Naive thymus-derived CD4-positive, alpha-beta T cell (primary cell): ENCODE measurements at regions of chr1 and their contacts with region 1.

Region 1: DNA sequence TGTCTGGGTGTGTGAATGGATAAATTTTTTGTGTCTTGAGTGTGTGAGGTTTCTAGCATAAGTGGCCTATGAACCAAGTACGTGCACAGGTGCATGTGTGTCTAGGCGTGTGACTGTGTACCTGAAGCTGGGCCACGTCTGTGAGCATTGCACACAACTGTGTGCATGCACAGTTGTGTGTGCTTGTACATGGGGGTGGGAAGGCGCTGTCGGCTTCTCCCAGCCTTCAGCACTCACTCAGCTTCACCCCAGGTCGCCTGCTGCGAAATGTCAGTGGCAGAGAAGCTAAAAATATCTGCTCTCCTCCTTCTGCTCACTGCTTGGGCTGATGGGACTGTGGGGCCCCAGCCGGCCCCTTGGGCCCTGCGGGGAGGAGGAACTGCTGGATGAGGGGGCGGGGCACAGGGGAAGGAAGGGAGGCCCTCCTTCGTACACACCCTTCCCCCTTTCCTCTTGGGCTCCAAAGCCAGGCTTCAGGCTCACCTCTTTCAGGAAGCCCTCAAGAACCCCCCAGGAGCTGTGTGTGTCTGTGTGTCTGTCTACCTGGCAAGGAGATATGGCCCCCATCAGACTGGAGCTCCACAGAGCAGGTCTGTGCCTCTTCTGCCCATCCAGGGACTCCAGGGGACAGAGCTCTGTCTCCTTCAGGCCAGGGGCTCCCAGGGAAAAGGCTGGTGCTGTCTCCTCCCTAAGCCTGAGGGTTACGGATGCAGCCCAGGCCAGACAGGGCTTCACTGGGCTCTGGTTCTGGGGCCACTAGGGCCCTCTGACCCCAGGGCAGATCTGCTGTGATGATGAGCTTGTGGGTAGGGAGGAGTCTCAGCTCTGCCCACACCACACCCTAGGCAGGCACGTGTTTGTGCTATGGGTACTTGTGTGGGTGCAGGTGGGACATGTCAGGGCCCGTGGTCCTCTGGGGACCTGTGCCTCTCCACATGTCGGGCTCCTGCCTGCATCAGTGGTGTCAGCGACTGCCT is 35.6 kb upstream of the WASF2 start:
- DNase-seq: peak in 8 of 9 donors; percentile 41 to 67 (median 52)
- ATAC-seq: peak; percentile 36
- H3K4me3 ChIP-seq: peak overlapping the region; percentile 53
- H3K4me3 Mint-ChIP-seq: peak overlapping the region; percentile 72 to 98 (median 93)
- H3K27ac ChIP-seq: peak overlapping the region; percentile 93
- H3K27ac Mint-ChIP-seq: peak overlapping the region; percentile 80 to 99 (median 98)
- H3K4me1 ChIP-seq: peaks cover 62% of the 10 kb centered on the region in 2 donors
- H3K4me1 Mint-ChIP-seq: peaks cover 63 to 82% (median 74%) of the 10 kb centered on the region in 7 donors
- H3K27me3 ChIP-seq: no peaks in the 10 kb centered on the region
- H3K27me3 Mint-ChIP-seq: no peaks in the 10 kb centered on the region

Region 2: GRCh38 chr1:27349784-27350662 is 175.6 kb before region 1 on chr1:
- CTCF ChIA-PET with region 1: no interaction called
- POLR2A ChIA-PET with region 1: no interaction called
- intact Hi-C with region 1: no loop called
- DNase-seq: no peak
- ATAC-seq: peak; percentile 79
- H3K4me3 ChIP-seq: no peak overlapping the region
- H3K4me3 Mint-ChIP-seq: peak overlapping the region in 1 of 10 donors; percentile 69
- H3K27ac ChIP-seq: peak overlapping the region; percentile 70
- H3K27ac Mint-ChIP-seq: no peak overlapping the region
- H3K4me1 ChIP-seq: peaks cover 0 to 7% of the 10 kb centered on the region in 2 donors
- H3K4me1 Mint-ChIP-seq: peaks cover 5 to 28% (median 23%) of the 10 kb centered on the region in 7 donors
- H3K27me3 ChIP-seq: no peaks in the 10 kb centered on the region
- H3K27me3 Mint-ChIP-seq: no peaks in the 10 kb centered on the region

Region 3: GRCh38 chr1:27402349-27402754 is 123.2 kb before region 1 on chr1:
- CTCF ChIA-PET with region 1: interaction called, 6 read pairs
- POLR2A ChIA-PET with region 1: interaction called, 9 read pairs
- intact Hi-C with region 1: loop called in 1 of 2 experiments (anchors 1 kb)
- DNase-seq: no peak
- ATAC-seq: peak; percentile 44
- H3K4me3 ChIP-seq: no peak overlapping the region
- H3K4me3 Mint-ChIP-seq: no peak overlapping the region
- H3K27ac ChIP-seq: peak overlapping the region; percentile 48
- H3K27ac Mint-ChIP-seq: peak overlapping the region in 7 of 9 donors; percentile 36 to 95 (median 87)
- H3K4me1 ChIP-seq: peaks cover 0 to 17% of the 10 kb centered on the region in 2 donors
- H3K4me1 Mint-ChIP-seq: peaks cover 10 to 40% (median 33%) of the 10 kb centered on the region in 7 donors
- H3K27me3 ChIP-seq: no peaks in the 10 kb centered on the region
- H3K27me3 Mint-ChIP-seq: no peaks in the 10 kb centered on the region

Region 4: DNA sequence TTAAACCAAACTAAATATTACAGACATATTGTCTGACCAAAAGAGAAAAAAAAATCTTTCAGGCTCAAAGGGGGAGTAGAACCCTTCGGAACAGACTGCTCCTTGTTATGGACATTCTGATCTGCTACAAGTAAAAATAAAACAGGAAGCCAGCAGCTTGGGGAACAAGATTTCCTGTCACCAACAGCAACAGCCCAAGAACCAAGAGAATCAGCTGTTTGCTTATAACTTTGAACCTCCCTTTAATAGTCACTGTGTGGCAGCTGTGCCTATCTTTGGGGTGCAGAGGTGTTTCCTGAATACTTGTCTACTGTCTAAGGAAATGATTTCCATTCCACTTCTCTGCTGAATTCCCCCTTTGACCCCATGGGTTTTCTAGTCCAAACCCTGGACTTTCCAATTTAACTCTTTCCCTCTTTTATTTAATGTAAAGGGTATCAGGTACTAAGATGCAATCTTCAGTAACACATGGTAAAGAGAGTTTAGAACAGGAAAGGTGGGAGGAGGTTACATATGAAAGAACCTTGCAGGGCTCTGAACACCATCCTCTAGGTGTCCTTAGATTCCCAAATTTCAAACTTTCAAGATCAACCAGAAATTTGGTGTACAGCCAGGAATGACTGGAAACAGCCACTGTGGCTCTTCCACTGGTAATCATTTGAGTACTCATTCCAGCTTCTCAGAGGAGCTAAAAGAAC is 94.5 kb before region 1 on chr1:
- CTCF ChIA-PET with region 1: interaction called, 5 read pairs
- POLR2A ChIA-PET with region 1: interaction called, 13 read pairs
- intact Hi-C with region 1: loop called (anchors 1 to 5 kb)
- DNase-seq: peak in 7 of 9 donors; percentile 50 to 72 (median 69)
- ATAC-seq: peak; percentile 81
- H3K4me3 ChIP-seq: peak overlapping the region; percentile 21
- H3K4me3 Mint-ChIP-seq: peak overlapping the region; percentile 58 to 94 (median 82)
- H3K27ac ChIP-seq: peak overlapping the region; percentile 74
- H3K27ac Mint-ChIP-seq: peak overlapping the region; percentile 71 to 96 (median 89)
- H3K4me1 ChIP-seq: peaks cover 33 to 86% of the 10 kb centered on the region in 2 donors
- H3K4me1 Mint-ChIP-seq: peaks cover 54 to 91% (median 77%) of the 10 kb centered on the region in 7 donors
- H3K27me3 ChIP-seq: no peaks in the 10 kb centered on the region
- H3K27me3 Mint-ChIP-seq: no peaks in the 10 kb centered on the region

Region 5: DNA sequence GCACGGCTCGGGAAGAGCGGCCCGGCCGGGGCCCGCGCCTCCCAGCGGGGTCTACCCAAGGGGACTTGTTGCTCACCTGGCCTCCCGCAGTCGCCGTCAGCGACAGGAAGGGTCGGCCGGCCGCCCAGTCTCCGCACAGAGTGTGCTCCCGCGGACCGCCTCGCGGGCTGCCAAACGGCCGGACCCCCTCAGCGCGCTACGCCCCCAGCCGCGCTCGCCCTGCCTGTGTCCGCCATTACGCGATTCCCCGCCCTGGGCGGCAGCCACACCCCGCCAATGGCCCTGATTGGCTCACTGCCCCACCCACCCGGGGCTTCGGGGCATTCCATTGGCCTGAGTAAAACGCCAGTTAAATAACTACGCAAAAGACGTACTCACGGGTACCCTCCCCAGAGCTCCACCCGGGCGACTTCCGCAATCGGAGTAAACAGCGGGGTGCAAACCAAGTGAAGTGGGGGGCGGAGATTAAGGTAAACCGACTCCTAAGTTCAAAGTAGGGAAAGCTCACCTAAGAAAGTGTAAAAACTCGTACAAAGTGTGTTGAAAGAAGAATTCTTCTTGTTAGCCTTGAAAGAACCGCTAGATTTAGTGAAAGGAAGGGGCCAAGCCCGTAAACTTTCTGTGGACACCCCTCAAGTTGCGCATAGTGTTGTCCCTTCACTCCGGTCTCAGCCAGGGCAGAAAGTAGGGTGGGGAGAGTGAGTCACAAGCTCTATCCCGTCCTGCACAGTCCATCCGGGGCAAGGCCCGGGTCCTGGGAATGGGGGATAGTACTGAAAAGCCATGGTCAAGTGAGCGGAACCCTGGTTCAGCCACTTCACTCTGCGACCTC is 35.5 kb before region 1 on chr1 and contains the start of gene WASF2:
- CTCF ChIA-PET with region 1: interaction called, 6 read pairs
- POLR2A ChIA-PET with region 1: interaction called, 42 read pairs
- intact Hi-C with region 1: loop called (anchors 1 kb)
- DNase-seq: peak; percentile 91 to 99 (median 97)
- ATAC-seq: peak; percentile 98
- H3K4me3 ChIP-seq: peak within 1 kb of the TSS; percentile 100
- H3K4me3 Mint-ChIP-seq: peak within 1 kb of the TSS; percentile 89 to 99 (median 96)
- H3K27ac ChIP-seq: peak within 1 kb of the TSS; percentile 88
- H3K27ac Mint-ChIP-seq: peak within 1 kb of the TSS; percentile 97 to 100 (median 99)
- H3K4me1 ChIP-seq: peaks cover 14 to 19% of the 10 kb centered on the region in 2 donors
- H3K4me1 Mint-ChIP-seq: peaks cover 21 to 46% (median 42%) of the 10 kb centered on the region in 7 donors
- H3K27me3 ChIP-seq: no peaks in the 10 kb centered on the region
- H3K27me3 Mint-ChIP-seq: no peaks in the 10 kb centered on the region
- total RNA-seq, gene WASF2: 136 to 177 (median 145) TPM

Region 6: GRCh38 chr1:27556781-27557595 is 31.4 kb after region 1 on chr1:
- CTCF ChIA-PET with region 1: interaction called, 11 read pairs
- POLR2A ChIA-PET with region 1: interaction called, 5 read pairs
- intact Hi-C with region 1: loop called (anchors 1 kb)
- DNase-seq: peak; percentile 51 to 79 (median 65)
- ATAC-seq: peak; percentile 87
- H3K4me3 ChIP-seq: no peak overlapping the region
- H3K4me3 Mint-ChIP-seq: peak overlapping the region; percentile 14 to 88 (median 67)
- H3K27ac ChIP-seq: no peak overlapping the region
- H3K27ac Mint-ChIP-seq: peak overlapping the region; percentile 32 to 98 (median 81)
- H3K4me1 ChIP-seq: peaks cover 8 to 16% of the 10 kb centered on the region in 2 donors
- H3K4me1 Mint-ChIP-seq: peaks cover 23 to 56% (median 46%) of the 10 kb centered on the region in 7 donors
- H3K27me3 ChIP-seq: no peaks in the 10 kb centered on the region
- H3K27me3 Mint-ChIP-seq: no peaks in the 10 kb centered on the region

Region 7: DNA sequence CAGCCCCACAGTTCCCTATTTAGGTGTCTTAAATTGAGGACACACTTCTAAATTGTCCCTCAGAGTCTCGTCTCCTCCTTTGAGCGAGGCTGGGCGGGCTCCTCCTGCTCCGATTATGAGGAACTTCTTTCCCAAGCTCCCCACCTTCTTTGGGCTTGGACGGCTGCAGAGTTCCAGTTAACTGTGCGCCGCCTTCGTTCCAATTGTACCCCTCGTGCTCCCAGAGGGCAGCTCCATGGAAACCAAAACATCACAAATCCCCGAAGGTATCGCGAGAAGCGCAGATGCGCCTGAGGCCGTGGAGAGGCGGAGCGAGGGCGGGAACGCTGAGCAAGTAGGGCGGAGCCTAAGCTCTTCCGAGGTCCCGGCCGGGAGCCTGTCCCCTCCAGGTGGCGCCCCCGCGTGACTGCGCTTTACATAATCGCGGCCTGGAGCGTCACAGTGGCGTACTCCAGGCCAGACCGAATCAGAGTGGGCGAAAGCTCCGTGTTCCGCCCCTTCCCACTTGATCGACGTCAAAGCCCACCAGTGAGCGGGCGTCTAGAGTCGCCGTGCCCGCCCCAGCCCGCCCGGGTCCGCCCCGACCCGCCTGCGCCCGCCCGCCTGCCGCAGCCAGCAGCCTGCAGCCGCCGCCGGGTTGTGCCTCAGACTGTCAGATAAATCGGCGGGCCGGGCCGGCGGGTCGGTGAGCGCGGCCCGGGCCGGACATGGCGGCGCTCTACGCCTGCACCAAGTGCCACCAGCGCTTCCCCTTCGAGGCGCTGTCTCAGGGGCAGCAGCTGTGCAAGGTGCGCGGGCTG is 200.0 kb after region 1 on chr1 and contains the start of gene FAM76A:
- CTCF ChIA-PET with region 1: interaction called, 5 read pairs
- POLR2A ChIA-PET with region 1: no interaction called
- intact Hi-C with region 1: loop called in 1 of 2 experiments (anchors 5 kb)
- DNase-seq: peak; percentile 97 to 100 (median 99)
- ATAC-seq: peak; percentile 97
- H3K4me3 ChIP-seq: peak within 1 kb of the TSS; percentile 77
- H3K4me3 Mint-ChIP-seq: peak within 1 kb of the TSS; percentile 86 to 93 (median 90)
- H3K27ac ChIP-seq: peak within 1 kb of the TSS; percentile 91
- H3K27ac Mint-ChIP-seq: peak within 1 kb of the TSS; percentile 93 to 100 (median 98)
- H3K4me1 ChIP-seq: peaks cover 7 to 17% of the 10 kb centered on the region in 2 donors
- H3K4me1 Mint-ChIP-seq: peaks cover 9 to 35% (median 28%) of the 10 kb centered on the region in 7 donors
- H3K27me3 ChIP-seq: no peaks in the 10 kb centered on the region
- H3K27me3 Mint-ChIP-seq: no peaks in the 10 kb centered on the region
- total RNA-seq, gene FAM76A: 15.2 to 25.2 (median 22.2) TPM